Activated CD4-positive, alpha-beta memory T cell treated with anti-CD3 and anti-CD28 coated beads for 36 hours (primary cell): ENCODE measurements at regions of chrX and their contacts with region 1.

Region 1: DNA sequence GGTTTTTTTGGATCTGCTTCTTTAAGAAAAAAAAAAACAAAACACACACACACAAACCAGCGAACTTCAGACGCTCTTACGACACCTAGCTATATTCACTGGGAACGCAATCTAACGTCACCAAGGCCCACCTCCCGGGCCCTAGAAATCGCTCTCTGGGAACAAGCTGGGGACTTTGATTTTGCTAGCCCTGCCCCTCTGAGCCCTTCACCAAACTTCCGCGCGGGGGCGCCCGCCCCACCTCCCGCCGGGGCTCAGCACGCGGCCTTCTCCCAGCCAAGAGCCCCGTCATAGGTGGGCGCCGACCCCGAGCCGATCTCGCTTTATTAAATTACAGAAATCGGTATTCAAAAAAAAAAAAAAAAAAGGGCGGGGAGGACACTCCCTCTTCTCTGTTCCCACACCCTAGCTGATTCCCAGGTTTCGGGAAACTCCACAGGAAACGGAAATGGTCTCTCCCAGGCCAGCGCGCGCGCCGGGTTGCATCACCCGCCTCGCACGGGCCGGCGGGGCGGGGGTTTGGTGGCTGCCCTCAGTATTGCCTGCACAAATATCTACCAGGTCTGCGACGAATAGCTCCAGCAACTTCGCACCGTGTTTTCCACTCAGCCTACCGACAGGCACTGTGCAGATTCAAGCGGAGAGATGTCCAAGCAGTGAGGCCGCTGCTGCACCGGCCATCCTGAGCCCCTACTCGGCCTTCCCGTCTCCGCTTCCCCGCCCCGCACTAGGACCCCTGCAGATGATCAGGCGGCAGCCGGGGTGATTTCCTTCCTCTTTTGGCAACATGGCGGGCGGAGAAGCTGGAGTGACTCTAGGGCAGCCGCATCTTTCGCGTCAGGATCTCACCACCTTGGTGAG is at the start of gene EIF2S3:
- DNase-seq: peak; percentile 88
- H3K4me3 Mint-ChIP-seq: no peak within 1 kb of the TSS
- H3K27ac Mint-ChIP-seq: no peak within 1 kb of the TSS
- H3K4me1 Mint-ChIP-seq: peaks cover 4% of the 10 kb centered on the region
- H3K27me3 Mint-ChIP-seq: no peaks in the 10 kb centered on the region
- total RNA-seq, gene EIF2S3: 282 to 295 TPM

Region 2: GRCh38 chrX:23667239-23668177 is 386.9 kb before region 1 on chrX and contains the start of gene PRDX4:
- CTCF ChIA-PET with region 1: interaction called, 3 read pairs
- POLR2A ChIA-PET with region 1: no interaction called
- intact Hi-C with region 1: loop called (anchors 10 kb)
- DNase-seq: peak; percentile 87
- H3K4me3 Mint-ChIP-seq: peak within 1 kb of the TSS; percentile 80
- H3K27ac Mint-ChIP-seq: peak within 1 kb of the TSS; percentile 87
- H3K4me1 Mint-ChIP-seq: peaks cover 23% of the 10 kb centered on the region
- H3K27me3 Mint-ChIP-seq: no peaks in the 10 kb centered on the region
- total RNA-seq, gene PRDX4: 56.0 to 59.8 TPM

Region 3: DNA sequence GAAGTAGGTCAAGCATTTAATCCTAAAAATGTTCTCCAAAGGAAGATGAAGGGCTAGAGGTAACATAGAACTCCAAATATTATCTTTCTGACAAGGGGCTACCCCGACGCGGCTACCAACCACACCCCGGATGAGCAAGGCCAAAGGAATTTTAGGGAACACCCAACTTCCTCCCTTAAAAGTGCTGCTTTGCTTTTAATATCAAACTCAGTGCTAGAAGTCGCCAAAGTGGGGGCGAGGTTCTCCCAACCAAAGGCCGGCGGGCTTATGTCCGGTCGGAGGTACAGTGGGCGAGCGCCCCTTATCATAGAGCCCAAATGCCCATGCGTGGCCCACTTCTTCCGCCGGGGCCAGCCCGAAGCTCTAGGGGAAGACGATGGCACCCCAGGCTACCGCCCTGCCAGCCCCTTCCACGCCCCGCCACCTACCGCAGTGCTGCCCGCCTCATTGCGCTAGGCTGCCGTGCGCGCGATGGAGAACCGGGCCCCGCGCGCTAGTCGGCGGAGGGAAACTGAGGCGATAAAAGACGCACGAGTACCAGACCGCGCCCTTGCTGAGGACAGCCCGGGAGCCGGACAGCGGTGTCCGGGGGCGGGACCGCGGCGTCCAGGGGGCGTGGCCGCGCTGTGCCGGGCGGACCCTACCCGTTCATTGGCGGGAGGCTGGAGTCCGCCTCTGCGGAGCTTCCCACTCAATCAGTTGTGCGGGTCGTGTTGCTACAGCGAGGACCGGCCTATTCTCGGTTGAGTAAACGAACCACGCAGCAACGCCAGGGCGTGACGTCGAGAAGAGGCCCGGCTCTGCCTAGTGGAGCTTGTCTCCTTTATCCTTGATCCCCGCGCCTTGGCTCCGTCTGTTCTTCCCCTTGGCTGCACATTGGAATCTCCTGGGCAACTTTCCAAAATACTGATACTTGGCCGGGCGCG is 311.5 kb before region 1 on chrX and contains the start of gene ACOT9:
- CTCF ChIA-PET with region 1: no interaction called
- POLR2A ChIA-PET with region 1: interaction called, 3 read pairs
- intact Hi-C with region 1: loop called (anchors 1 kb)
- DNase-seq: peak; percentile 87
- H3K4me3 Mint-ChIP-seq: peak within 1 kb of the TSS; percentile 86
- H3K27ac Mint-ChIP-seq: peak within 1 kb of the TSS; percentile 86
- H3K4me1 Mint-ChIP-seq: peaks cover 32% of the 10 kb centered on the region
- H3K27me3 Mint-ChIP-seq: no peaks in the 10 kb centered on the region
- total RNA-seq, gene ACOT9: 50.2 to 52.1 TPM

Region 4: DNA sequence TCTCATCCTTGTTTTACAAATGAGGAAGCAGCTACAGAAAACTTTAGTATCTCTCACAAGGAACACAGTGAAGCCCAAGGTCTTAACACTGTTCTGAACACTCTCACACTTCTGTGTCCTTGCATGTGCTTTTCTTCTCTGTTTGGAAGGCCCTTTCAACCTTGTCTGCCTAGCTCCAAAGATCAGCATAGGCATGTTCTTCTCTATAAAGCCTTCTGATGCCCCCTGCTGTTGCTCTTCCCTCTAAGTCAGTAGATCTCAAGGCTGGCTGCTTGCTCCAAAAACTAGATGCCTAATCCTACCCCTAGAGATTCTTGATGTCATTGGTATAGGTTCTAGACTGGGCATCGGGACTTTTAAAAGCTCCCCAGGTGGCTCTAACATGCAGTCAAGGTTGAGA is 152.6 kb before region 1 on chrX:
- CTCF ChIA-PET with region 1: interaction called, 36 read pairs
- POLR2A ChIA-PET with region 1: interaction called, 21 read pairs
- intact Hi-C with region 1: loop called (anchors 1 kb)
- DNase-seq: peak; percentile 46
- H3K4me3 Mint-ChIP-seq: no peak overlapping the region
- H3K27ac Mint-ChIP-seq: no peak overlapping the region
- H3K4me1 Mint-ChIP-seq: peaks cover 15% of the 10 kb centered on the region
- H3K27me3 Mint-ChIP-seq: no peaks in the 10 kb centered on the region

Region 5: DNA sequence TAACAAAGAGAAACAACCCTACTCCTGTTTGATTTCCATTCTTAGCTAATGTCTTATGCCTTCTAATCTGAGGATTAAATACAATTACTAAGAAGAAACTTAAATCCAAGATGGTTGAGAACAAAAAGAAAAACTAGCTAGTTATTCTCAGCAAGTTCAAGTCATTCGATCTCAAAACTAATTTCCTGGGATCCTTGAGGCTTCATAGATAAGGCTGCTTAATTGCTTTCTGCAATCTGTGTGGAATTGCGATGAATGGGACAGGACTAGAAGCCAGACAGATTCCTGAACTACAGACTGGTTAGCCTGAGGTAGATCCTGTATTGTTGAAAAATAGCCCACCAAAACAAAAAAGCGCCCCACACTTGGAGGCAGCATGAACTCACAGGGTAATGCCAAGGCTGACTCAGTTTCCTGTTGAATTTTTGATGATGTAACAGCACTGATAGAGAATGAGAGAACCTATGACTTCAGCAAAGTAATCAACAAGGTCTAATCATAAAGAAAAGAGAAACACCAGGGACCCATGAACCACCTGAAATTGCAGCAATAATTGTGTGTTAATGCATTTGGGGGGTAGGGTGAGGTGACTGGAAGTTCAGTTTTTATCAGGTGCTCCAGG is 61.3 kb before region 1 on chrX:
- CTCF ChIA-PET with region 1: interaction called, 4 read pairs
- POLR2A ChIA-PET with region 1: no interaction called
- intact Hi-C with region 1: loop called (anchors 5 kb)
- DNase-seq: no peak
- H3K4me3 Mint-ChIP-seq: no peak overlapping the region
- H3K27ac Mint-ChIP-seq: peak overlapping the region; percentile 62
- H3K4me1 Mint-ChIP-seq: peaks cover 15% of the 10 kb centered on the region
- H3K27me3 Mint-ChIP-seq: no peaks in the 10 kb centered on the region

Region 6: DNA sequence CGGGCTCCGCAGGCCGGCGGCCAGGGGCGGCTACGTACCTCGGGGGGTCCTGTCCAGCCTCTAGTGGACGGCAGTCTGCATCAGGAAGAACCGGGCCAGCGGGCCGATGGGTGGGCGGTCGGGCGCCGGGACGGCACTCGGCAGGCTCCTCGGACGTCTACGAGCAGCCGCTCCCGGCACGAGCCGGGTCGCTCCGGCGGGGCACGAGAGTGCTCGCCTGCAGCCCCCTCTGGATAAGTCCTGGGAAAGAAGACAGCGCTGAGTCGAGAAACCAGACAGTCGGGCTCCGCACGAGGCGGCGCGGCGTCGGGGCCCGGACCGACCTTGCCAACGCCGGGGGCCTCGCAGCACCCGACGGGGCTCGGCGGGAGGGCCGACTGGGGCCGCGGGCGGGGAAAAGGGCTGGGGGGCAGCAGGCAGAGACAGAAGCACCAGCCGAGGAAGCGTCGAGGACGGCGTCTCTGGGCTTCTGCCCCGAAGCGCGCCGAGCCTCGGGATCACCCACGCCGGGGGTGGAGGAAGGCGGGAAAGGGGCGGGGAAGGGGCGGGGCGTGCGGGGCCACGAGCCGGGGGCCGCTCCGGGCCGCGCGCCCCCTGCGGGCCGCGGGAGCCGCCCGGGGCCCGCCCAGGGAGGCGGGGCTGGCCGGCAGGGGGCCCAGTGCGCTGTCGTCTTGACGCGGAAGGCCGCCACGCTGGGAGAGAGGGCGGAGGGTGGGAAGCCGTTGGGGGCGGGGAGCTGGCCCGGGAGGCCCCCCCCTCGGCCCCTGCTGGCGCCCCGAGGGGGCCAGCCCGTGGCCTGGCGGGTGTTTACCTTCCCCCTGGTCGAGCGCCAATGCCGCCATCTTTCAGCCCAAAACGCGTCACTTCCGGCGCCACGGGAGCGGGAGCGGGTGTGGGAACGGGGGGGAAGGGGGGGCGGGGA is 29.3 kb before region 1 on chrX:
- CTCF ChIA-PET with region 1: interaction called, 36 read pairs
- POLR2A ChIA-PET with region 1: interaction called, 22 read pairs
- intact Hi-C with region 1: loop called (anchors 1 kb)
- DNase-seq: peak; percentile 91
- H3K4me3 Mint-ChIP-seq: peak overlapping the region; percentile 80
- H3K27ac Mint-ChIP-seq: no peak overlapping the region
- H3K4me1 Mint-ChIP-seq: peaks cover 25% of the 10 kb centered on the region
- H3K27me3 Mint-ChIP-seq: no peaks in the 10 kb centered on the region

Region 7: GRCh38 chrX:24150051-24150790 is 95.8 kb after region 1 on chrX:
- CTCF ChIA-PET with region 1: interaction called, 4 read pairs
- POLR2A ChIA-PET with region 1: interaction called, 3 read pairs
- intact Hi-C with region 1: loop called (anchors 1 kb)
- DNase-seq: peak; percentile 89
- H3K4me3 Mint-ChIP-seq: peak overlapping the region; percentile 79
- H3K27ac Mint-ChIP-seq: peak overlapping the region; percentile 83
- H3K4me1 Mint-ChIP-seq: peaks cover 54% of the 10 kb centered on the region
- H3K27me3 Mint-ChIP-seq: no peaks in the 10 kb centered on the region